ENCODE measurements at regions of chr11 and their contacts with region 1.

Region 1: GRCh38 chr11:819129-819931 is 616 bp downstream of the PNPLA2 start:
- DNase-seq: peak; percentile 97
- ATAC-seq: peak; percentile 62
- H3K4me3 Mint-ChIP-seq: peak overlapping the region; percentile 82
- H3K27ac Mint-ChIP-seq: peak overlapping the region; percentile 82
- H3K4me1 Mint-ChIP-seq: peaks cover 7% of the 10 kb centered on the region
- H3K27me3 Mint-ChIP-seq: no peaks in the 10 kb centered on the region

Region 2: DNA sequence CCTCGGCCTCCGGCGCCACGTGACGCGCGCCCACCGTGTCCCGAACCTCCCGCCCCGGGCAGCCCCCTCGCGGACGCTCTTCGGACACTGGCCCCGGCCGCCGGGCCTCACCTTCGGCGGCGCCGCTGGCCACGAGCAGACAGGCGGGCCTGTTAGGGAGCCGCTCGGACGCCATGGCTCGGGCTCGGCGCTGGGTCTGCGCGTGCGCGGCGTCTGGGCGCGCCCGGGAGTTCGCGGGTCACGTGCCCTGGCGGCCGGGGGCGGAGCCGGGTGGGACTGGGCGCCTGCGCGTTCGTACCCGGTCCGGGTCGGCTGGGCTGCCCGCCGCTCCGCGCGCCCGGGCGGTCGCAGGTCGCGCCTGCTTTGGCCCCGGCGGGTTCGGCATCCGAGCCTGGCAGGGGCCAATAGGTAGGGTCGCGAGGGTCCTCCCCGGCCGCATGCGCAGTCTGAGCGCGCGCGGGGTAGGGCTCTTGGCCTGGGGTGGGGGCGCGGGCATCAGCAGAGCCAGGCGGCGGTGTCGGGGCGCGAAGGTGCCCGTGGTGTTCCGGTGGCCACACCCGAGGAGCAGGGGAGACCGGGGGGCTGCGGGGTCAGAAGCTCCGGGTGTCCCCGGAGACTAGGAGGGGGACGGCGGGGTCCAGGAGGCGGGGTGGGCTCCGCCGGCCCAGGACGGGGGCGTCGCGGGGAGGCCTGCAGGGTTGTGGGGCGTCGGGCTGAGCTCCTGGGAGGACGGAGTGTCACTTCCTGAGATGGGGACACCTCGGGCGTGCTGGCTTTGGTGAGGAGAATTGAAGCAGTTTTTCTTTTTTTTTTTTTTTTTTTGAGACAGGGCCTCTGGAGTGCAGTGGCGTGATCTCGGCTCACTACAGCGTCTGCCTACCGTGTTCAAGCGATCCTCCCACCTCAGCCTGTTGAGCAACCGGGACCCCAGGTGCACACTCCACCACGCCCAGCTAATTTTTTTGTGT is 41.8 kb before region 1 on chr11 and contains the start of gene GATD1:
- POLR2A ChIA-PET with region 1: interaction called, 14 read pairs
- DNase-seq: peak; percentile 99
- ATAC-seq: peak; percentile 88
- H3K4me3 Mint-ChIP-seq: peak within 1 kb of the TSS; percentile 88
- H3K27ac Mint-ChIP-seq: peak within 1 kb of the TSS; percentile 85
- H3K4me1 Mint-ChIP-seq: peaks cover 15% of the 10 kb centered on the region
- H3K27me3 Mint-ChIP-seq: no peaks in the 10 kb centered on the region
- total RNA-seq, gene GATD1: 59.8 to 62.4 TPM

Region 3: GRCh38 chr11:798093-798713 is 21.1 kb before region 1 on chr11 and contains the start of gene SLC25A22:
- POLR2A ChIA-PET with region 1: interaction called, 14 read pairs
- DNase-seq: peak; percentile 96
- ATAC-seq: peak; percentile 48
- H3K4me3 Mint-ChIP-seq: peak within 1 kb of the TSS; percentile 98
- H3K27ac Mint-ChIP-seq: peak within 1 kb of the TSS; percentile 95
- H3K4me1 Mint-ChIP-seq: peaks cover 6% of the 10 kb centered on the region
- H3K27me3 Mint-ChIP-seq: no peaks in the 10 kb centered on the region
- total RNA-seq, gene SLC25A22: 35.1 to 35.8 TPM

Region 4: GRCh38 chr11:803770-804598 is 15.3 kb before region 1 on chr11:
- POLR2A ChIA-PET with region 1: interaction called, 51 read pairs
- DNase-seq: no peak
- ATAC-seq: no peak
- H3K4me3 Mint-ChIP-seq: peak overlapping the region; percentile 84
- H3K27ac Mint-ChIP-seq: peak overlapping the region; percentile 80
- H3K4me1 Mint-ChIP-seq: peaks cover 12% of the 10 kb centered on the region
- H3K27me3 Mint-ChIP-seq: no peaks in the 10 kb centered on the region

Region 5: GRCh38 chr11:832321-833113 is 13.2 kb after region 1 on chr11 and contains the start of gene CD151:
- POLR2A ChIA-PET with region 1: interaction called, 39 read pairs
- DNase-seq: peak; percentile 71
- ATAC-seq: peak; percentile 48
- H3K4me3 Mint-ChIP-seq: peak within 1 kb of the TSS; percentile 62
- H3K27ac Mint-ChIP-seq: no peak within 1 kb of the TSS
- H3K4me1 Mint-ChIP-seq: peaks cover 17% of the 10 kb centered on the region
- H3K27me3 Mint-ChIP-seq: peaks cover 29% of the 10 kb centered on the region
- total RNA-seq, gene CD151: 36.4 to 37.4 TPM

Region 6: GRCh38 chr11:842370-843002 is 23.2 kb after region 1 on chr11 and contains the starts of genes POLR2L and TSPAN4:
- POLR2A ChIA-PET with region 1: interaction called, 17 read pairs
- DNase-seq: peak; percentile 94
- ATAC-seq: peak; percentile 73
- H3K4me3 Mint-ChIP-seq: peak within 1 kb of the TSS; percentile 87
- H3K27ac Mint-ChIP-seq: peak within 1 kb of the TSS; percentile 82
- H3K4me1 Mint-ChIP-seq: peaks cover 12% of the 10 kb centered on the region
- H3K27me3 Mint-ChIP-seq: no peaks in the 10 kb centered on the region
- total RNA-seq, gene POLR2L: 76.7 to 78.9 TPM
- total RNA-seq, gene TSPAN4: 19.0 to 20.3 TPM

Measured in activated naive CD8-positive, alpha-beta T cell treated with anti-CD3 and anti-CD28 coated beads, Interleukin-2, amount 10 ng/mL, durations not matched to agents 7 days and 5 days (primary cell).